MCF 10A (cell line): ENCODE measurements at regions of chr13 and their contacts with region 1.

Region 1: GRCh38 chr13:97109841-97110492 is 112.2 kb upstream of the MBNL2 start:
- DNase-seq: peak; percentile 88
- H3K4me3 Mint-ChIP-seq: no peak overlapping the region
- H3K27ac Mint-ChIP-seq: no peak overlapping the region
- H3K4me1 Mint-ChIP-seq: peaks cover 6% of the 10 kb centered on the region
- H3K27me3 Mint-ChIP-seq: peaks cover 19% of the 10 kb centered on the region
- CTCF ChIP-seq: peak; percentile 99

Region 2: GRCh38 chr13:96781141-96781540 is 328.8 kb before region 1 on chr13:
- CTCF ChIA-PET with region 1: no interaction called
- POLR2A ChIA-PET with region 1: no interaction called
- intact Hi-C with region 1: no loop called
- DNase-seq: peak; percentile 47
- H3K4me3 Mint-ChIP-seq: no peak overlapping the region
- H3K27ac Mint-ChIP-seq: peak overlapping the region; percentile 5
- H3K4me1 Mint-ChIP-seq: peaks cover 16% of the 10 kb centered on the region
- H3K27me3 Mint-ChIP-seq: no peaks in the 10 kb centered on the region
- CTCF ChIP-seq: no peak

Region 3: DNA sequence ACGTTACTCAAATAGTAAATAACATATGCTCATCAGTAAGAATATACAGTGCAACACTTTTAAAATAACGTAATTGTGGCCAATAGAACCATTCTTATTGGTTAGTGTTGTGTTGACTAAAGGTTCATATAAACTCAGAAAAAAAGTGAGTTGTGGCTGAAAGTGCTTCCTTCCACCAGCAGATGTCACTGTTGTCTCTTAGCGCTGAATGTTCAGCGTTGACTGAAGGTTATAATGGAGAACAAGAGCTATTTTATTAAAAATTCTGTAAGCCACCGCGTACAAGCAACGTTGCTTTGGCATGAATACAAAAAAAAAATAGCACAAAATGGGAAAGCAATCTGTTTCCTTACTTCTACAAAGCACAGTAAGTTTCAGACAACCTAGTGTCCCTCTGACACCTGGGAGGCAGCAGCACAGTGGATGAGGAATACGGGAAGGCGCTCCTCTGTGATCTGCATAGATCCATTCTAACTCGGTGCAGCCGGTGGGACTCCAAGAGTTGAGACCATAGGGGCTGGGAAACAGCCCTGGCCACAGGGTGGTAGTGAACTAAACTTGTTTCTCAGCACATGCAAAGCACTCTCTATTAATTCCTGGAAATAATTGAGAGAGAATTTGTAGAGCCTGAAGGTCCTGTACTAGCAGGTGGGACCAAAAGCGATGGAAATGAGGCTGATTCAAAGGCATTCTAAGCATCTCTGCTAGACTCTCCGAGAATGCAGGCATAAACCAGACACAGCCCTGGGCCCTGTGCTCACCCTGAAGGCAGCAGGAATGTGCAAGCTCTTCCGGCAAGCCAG is 91.7 kb before region 1 on chr13:
- CTCF ChIA-PET with region 1: interaction called, 10 read pairs
- POLR2A ChIA-PET with region 1: no interaction called
- intact Hi-C with region 1: loop called (anchors 5 kb)
- DNase-seq: peak; percentile 80
- H3K4me3 Mint-ChIP-seq: peak overlapping the region; percentile 11
- H3K27ac Mint-ChIP-seq: no peak overlapping the region
- H3K4me1 Mint-ChIP-seq: no peaks in the 10 kb centered on the region
- H3K27me3 Mint-ChIP-seq: peaks cover 27% of the 10 kb centered on the region
- CTCF ChIP-seq: peak; percentile 89

Region 4: DNA sequence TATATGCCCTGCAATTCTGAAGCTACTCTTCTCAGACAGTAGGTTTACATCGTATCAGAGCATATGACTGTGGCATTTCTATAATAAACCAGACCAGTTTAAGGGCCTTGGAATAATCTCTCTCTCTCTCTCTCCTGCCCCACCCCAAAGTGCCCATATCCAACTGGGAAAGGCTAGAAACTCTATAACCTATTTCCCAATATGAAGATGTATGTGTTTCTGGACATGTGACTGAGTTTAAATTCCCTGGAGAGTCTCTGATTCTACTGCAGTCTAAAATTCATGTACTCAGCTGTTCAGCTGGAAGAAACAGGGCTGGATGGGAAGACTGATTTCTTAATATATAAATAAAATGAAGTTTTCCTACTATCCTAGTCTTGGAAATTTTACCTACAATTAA is 20.2 kb after region 1 on chr13:
- CTCF ChIA-PET with region 1: interaction called, 106 read pairs
- POLR2A ChIA-PET with region 1: interaction called, 12 read pairs
- intact Hi-C with region 1: no loop called
- DNase-seq: peak; percentile 28
- H3K4me3 Mint-ChIP-seq: no peak overlapping the region
- H3K27ac Mint-ChIP-seq: no peak overlapping the region
- H3K4me1 Mint-ChIP-seq: peaks cover 19% of the 10 kb centered on the region
- H3K27me3 Mint-ChIP-seq: peaks cover 11% of the 10 kb centered on the region
- CTCF ChIP-seq: no peak

Region 5: GRCh38 chr13:97191615-97192014 is 81.6 kb after region 1 on chr13:
- CTCF ChIA-PET with region 1: interaction called, 18 read pairs
- POLR2A ChIA-PET with region 1: no interaction called
- intact Hi-C with region 1: no loop called
- DNase-seq: no peak
- H3K4me3 Mint-ChIP-seq: no peak overlapping the region
- H3K27ac Mint-ChIP-seq: no peak overlapping the region
- H3K4me1 Mint-ChIP-seq: no peaks in the 10 kb centered on the region
- H3K27me3 Mint-ChIP-seq: no peaks in the 10 kb centered on the region
- CTCF ChIP-seq: no peak

Region 6: GRCh38 chr13:97344265-97345175 is 234.6 kb after region 1 on chr13:
- CTCF ChIA-PET with region 1: interaction called, 175 read pairs
- POLR2A ChIA-PET with region 1: interaction called, 8 read pairs
- intact Hi-C with region 1: loop called (anchors 1 kb)
- DNase-seq: peak; percentile 83
- H3K4me3 Mint-ChIP-seq: no peak overlapping the region
- H3K27ac Mint-ChIP-seq: no peak overlapping the region
- H3K4me1 Mint-ChIP-seq: no peaks in the 10 kb centered on the region
- H3K27me3 Mint-ChIP-seq: no peaks in the 10 kb centered on the region
- CTCF ChIP-seq: peak; percentile 85

Region 7: GRCh38 chr13:97810152-97810551 is 700.2 kb after region 1 on chr13:
- CTCF ChIA-PET with region 1: no interaction called
- POLR2A ChIA-PET with region 1: no interaction called
- intact Hi-C with region 1: loop called (anchors 5 kb)
- DNase-seq: peak; percentile 48
- H3K4me3 Mint-ChIP-seq: no peak overlapping the region
- H3K27ac Mint-ChIP-seq: no peak overlapping the region
- H3K4me1 Mint-ChIP-seq: peaks cover 9% of the 10 kb centered on the region
- H3K27me3 Mint-ChIP-seq: peaks cover 25% of the 10 kb centered on the region
- CTCF ChIP-seq: peak; percentile 54